HepG2 (cell line): ENCODE measurements at regions of chr12 and their contacts with region 1.

Region 1: GRCh38 chr12:124036674-124037109 is 63.7 kb downstream of the ZNF664 start:
- DNase-seq: peak; percentile 15
- ATAC-seq: peak; percentile 54
- H3K4me3 ChIP-seq: no peak overlapping the region
- H3K27ac ChIP-seq: no peak overlapping the region
- H3K4me1 ChIP-seq: no peaks in the 10 kb centered on the region
- H3K27me3 ChIP-seq: peaks cover 2 to 3% of the 10 kb centered on the region in 2 experiments; a peak in 2 of 5 replicates
- CTCF ChIP-seq: peak; percentile 73
- EP300 ChIP-seq: no peak
- POLR2A ChIP-seq: no peak
- RAD21 ChIP-seq: peak; percentile 66; the same call in 1 of the 2 replicates

Region 2: DNA sequence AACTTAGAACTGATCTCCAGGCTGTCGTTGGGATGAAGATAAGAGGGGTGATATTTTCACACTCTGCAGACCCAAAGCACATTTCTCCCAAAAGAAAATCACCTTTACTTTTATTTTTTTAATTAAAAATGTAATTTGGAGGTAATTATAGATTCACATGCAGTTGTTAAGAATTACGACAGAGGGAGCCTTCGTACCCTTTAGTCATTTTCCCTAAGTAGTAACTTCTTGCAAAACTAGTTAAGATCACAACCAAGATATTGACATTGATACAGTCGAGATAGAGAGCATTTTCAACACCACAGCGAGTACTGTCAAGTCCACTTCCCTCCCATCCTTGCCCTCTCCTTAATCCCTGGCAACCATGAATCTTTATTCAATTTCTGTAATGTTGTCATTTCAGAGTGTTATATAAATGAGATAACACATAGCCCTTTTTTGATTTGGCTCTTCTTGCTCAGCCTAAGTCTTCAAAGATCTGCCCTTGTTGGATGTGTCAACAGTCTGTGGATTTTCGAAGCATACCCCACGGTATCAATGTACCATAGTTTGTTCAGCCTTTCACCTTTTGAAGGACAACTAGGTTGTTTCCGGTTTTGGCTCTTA is 235.0 kb before region 1 on chr12:
- CTCF ChIA-PET with region 1: no interaction called
- POLR2A ChIA-PET with region 1: no interaction called
- in situ Hi-C with region 1: no loop called
- intact Hi-C with region 1: loop called (anchors 5 kb)
- DNase-seq: no peak
- ATAC-seq: no peak
- H3K4me3 ChIP-seq: no peak overlapping the region
- H3K27ac ChIP-seq: no peak overlapping the region
- H3K4me1 ChIP-seq: no peaks in the 10 kb centered on the region; the same call in 1 of the 2 replicates
- H3K27me3 ChIP-seq: peaks cover 0 to 2% of the 10 kb centered on the region in 2 experiments; a peak in 2 of 5 replicates
- CTCF ChIP-seq: peak; percentile 35
- EP300 ChIP-seq: no peak
- POLR2A ChIP-seq: no peak
- RAD21 ChIP-seq: no peak

Region 3: GRCh38 chr12:124024263-124024678 is 12.4 kb before region 1 on chr12:
- CTCF ChIA-PET with region 1: no interaction called
- POLR2A ChIA-PET with region 1: no interaction called
- in situ Hi-C with region 1: no loop called
- intact Hi-C with region 1: no loop called
- DNase-seq: no peak
- ATAC-seq: peak; percentile 25; the same call in 1 of the 3 replicates
- H3K4me3 ChIP-seq: no peak overlapping the region
- H3K27ac ChIP-seq: no peak overlapping the region
- H3K4me1 ChIP-seq: no peaks in the 10 kb centered on the region
- H3K27me3 ChIP-seq: no peaks in the 10 kb centered on the region; a peak in 1 of 5 replicates
- CTCF ChIP-seq: no peak
- EP300 ChIP-seq: no peak
- POLR2A ChIP-seq: no peak
- RAD21 ChIP-seq: no peak

Region 4: DNA sequence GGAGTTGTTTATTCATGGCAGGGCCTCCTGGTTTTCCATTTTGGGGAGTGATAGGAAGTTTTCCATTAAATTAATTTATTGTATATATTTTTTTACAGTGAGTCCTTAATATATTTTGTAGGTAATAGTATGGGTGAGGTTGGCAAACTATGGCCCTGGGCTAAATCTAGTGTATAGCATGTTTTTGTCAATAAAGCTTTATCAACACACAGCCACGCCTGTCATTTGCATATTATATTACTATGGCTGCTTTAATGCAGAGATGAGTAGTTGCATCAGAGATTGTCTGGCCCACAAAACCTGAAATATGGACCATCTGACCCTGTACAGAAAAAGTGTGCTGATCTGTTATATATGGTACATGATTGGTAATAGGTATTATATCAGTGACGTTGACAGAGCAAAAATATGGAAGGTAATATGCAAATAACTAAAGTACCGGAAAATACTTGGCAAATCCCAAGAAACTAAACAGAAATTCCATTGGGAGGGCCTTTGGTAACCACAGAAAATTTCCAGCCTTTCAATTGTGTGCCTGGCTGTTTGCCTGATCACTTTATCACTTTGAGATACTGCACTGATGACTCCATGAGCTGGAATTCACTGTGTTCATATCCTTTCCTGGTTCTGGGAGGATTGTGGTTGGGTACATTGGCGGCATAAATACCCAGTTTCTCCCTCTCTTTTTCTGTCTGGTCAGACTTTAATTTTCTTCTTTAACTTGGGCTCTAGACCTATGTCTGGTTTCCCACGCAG is 196.5 kb after region 1 on chr12:
- CTCF ChIA-PET with region 1: no interaction called
- POLR2A ChIA-PET with region 1: no interaction called
- in situ Hi-C with region 1: no loop called
- intact Hi-C with region 1: no loop called
- DNase-seq: no peak
- ATAC-seq: no peak
- H3K4me3 ChIP-seq: no peak overlapping the region
- H3K27ac ChIP-seq: no peak overlapping the region
- H3K4me1 ChIP-seq: peaks cover 14% of the 10 kb centered on the region
- H3K27me3 ChIP-seq: peaks cover 0 to 7% of the 10 kb centered on the region in 2 experiments; a peak in 1 of 5 replicates
- CTCF ChIP-seq: no peak
- EP300 ChIP-seq: no peak
- POLR2A ChIP-seq: no peak
- RAD21 ChIP-seq: no peak

Region 5: DNA sequence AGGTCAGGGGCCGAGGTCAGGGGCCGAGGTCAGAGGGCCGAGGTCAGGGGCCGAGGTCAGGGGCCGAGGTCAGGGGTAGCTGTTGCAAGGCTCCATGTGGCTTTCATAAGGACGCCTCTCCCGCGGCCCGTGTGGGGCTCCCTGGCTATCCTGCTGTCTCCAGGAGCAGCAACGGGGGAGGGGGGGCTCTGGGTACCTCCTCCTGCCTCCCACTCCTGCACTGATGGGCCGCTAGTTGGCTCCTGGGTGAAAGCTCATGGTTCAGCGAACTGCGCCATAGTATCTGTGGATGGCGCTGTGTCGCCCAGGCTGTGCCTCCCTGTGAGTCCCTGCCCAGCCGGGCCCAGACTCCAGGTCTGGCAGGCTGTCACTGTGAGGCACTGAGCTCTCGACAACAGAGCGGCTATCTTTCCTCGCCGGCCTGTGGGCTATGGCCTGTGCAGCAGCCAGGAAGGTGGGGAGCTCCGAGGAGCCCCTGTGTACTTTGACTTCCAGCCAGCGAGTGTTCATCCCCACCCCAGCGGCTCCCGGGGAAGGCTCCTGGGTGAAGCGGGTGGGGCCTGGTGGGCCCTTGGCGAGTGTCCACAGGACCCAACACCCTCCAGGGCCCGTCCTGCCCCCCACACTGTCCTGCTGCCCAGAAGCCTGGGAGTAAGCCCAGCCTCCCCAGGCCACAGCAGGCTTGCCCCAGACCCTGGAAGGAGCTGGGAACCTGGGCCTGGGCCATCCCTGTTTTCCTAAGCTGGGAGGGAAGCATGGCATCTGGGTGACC is 266.3 kb after region 1 on chr12:
- CTCF ChIA-PET with region 1: no interaction called
- POLR2A ChIA-PET with region 1: no interaction called
- in situ Hi-C with region 1: no loop called
- intact Hi-C with region 1: no loop called
- DNase-seq: no peak
- ATAC-seq: peak; percentile 25
- H3K4me3 ChIP-seq: no peak overlapping the region
- H3K27ac ChIP-seq: no peak overlapping the region
- H3K4me1 ChIP-seq: no peaks in the 10 kb centered on the region
- H3K27me3 ChIP-seq: peaks cover under 1 to 36% of the 10 kb centered on the region in 2 experiments; a peak in 3 of 5 replicates
- CTCF ChIP-seq: no peak
- EP300 ChIP-seq: no peak
- POLR2A ChIP-seq: no peak
- RAD21 ChIP-seq: no peak

Region 6: GRCh38 chr12:124321040-124321481 is 284.4 kb after region 1 on chr12:
- CTCF ChIA-PET with region 1: interaction called, 59 read pairs
- POLR2A ChIA-PET with region 1: no interaction called
- in situ Hi-C with region 1: no loop called
- intact Hi-C with region 1: loop called (anchors 1 kb)
- DNase-seq: peak; percentile 24
- ATAC-seq: peak; percentile 87
- H3K4me3 ChIP-seq: no peak overlapping the region
- H3K27ac ChIP-seq: no peak overlapping the region
- H3K4me1 ChIP-seq: no peaks in the 10 kb centered on the region
- H3K27me3 ChIP-seq: peaks cover 7 to 27% of the 10 kb centered on the region in 2 experiments; a peak in 4 of 5 replicates
- CTCF ChIP-seq: peak; percentile 96
- EP300 ChIP-seq: no peak
- POLR2A ChIP-seq: no peak
- RAD21 ChIP-seq: peak; percentile 96